ENCODE measurements at regions of chr3 and their contacts with region 1.

Region 1: DNA sequence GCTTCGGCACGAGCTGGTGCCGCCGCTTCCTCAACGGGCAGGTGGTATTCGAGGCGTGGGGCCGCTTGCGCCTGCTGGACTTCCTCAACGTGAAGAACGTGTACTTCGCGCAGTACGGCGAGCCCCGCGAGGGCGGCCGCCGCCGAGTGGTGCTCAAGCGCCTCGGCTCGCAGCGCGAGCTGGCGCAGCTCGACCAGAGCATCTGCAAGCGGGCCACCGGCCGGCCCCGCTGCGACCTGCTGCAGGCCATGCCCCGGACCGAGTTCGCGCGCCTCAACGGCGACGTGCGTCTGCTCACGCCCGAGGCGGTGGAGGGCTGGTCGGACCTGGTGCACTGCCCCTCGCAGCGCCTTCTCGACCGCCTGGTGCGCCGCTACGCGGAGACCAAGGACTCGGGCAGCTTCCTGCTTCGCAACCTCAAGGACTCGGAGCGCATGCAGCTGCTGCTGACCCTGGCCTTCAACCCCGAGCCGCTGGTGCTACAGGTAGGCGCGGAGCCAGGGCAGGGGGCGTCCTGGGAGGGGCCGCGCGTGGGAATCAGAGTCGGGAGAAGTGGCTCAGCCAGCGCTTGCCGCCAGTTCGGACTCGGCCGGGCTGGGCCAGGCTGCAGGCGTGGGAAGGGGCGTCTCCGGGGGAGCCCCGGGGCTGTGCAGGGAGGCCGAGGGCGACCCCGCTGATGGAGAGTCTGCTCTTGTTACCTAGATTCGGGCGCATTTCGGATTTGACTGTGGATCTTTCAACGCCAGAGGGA is 1.1 kb downstream of the DIPK2A start:
- DNase-seq: peak in 4 of 5 donors; percentile 40 to 77 (median 57)
- H3K4me3 ChIP-seq: peak overlapping the region; percentile 45 to 99
- H3K4me3 Mint-ChIP-seq: peak overlapping the region; percentile 96 to 100 (median 98)
- H3K27ac ChIP-seq: peak overlapping the region; percentile 64
- H3K27ac Mint-ChIP-seq: peak overlapping the region; percentile 92 to 100 (median 94)
- H3K4me1 ChIP-seq: peaks cover 51% of the 10 kb centered on the region
- H3K4me1 Mint-ChIP-seq: peaks cover 25 to 59% (median 32%) of the 10 kb centered on the region in 4 donors
- H3K27me3 ChIP-seq: no peaks in the 10 kb centered on the region
- H3K27me3 Mint-ChIP-seq: no peaks in the 10 kb centered on the region

Region 2: DNA sequence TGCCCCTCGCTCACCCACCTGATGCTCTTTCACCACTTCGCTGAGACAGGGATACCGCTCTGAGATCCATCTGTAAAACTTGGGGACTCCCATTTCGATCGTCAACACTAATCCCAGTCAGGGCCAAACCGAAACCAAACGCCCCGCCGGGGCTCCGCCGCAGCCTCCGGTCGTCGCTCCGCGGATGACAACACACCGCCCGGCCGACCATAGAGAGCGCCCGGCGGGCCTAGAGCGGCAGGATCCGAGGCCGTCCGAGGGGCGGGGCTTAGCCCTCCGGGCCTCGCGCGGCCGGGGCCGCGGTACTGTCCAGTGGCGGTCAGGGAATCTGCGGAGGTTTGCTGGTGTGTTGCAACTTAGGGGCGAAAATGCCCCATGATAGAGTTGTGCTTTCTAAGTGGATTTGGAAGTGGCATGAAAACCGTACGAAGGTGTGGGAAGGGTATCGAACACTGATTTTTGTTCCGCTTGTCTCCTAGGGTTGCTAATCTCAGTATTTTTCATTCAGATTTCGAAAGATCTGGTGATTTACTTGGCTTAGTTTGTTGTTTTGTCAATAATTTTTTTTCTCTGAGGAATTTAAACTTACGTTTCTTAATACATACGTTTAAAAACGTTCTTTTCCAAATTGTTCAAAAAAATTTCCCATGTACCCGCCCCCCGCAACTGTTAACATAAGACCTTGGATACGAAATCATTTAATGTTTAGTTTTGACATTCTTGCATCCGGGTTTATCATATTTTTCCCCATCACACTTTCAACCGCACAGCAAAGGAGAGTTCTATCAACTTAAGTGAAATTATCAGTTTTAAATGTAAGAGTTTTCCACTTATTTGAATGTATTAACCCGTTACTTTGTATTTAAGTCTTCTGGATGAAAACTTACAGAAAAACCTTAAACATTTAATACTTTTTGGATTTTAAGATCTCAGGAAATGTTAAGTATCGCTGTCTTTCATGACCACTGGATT is 1524.5 kb before region 1 on chr3 and contains the start of gene XRN1:
- CTCF ChIA-PET with region 1: no interaction called
- POLR2A ChIA-PET with region 1: interaction called, 4 read pairs
- intact Hi-C with region 1: loop called (anchors 10 kb)
- DNase-seq: peak; percentile 94 to 98 (median 95)
- H3K4me3 ChIP-seq: peak within 1 kb of the TSS; percentile 96 to 99
- H3K4me3 Mint-ChIP-seq: peak within 1 kb of the TSS; percentile 98 to 100 (median 99)
- H3K27ac ChIP-seq: peak within 1 kb of the TSS; percentile 100
- H3K27ac Mint-ChIP-seq: peak within 1 kb of the TSS; percentile 99 to 100 (median 100)
- H3K4me1 ChIP-seq: peaks cover 44% of the 10 kb centered on the region
- H3K4me1 Mint-ChIP-seq: peaks cover 27 to 54% (median 41%) of the 10 kb centered on the region in 4 donors
- H3K27me3 ChIP-seq: no peaks in the 10 kb centered on the region
- H3K27me3 Mint-ChIP-seq: no peaks in the 10 kb centered on the region
- total RNA-seq, gene XRN1: 102 to 104 TPM

Region 3: GRCh38 chr3:142595951-142596725 is 1376.5 kb before region 1 on chr3 and contains the start of gene PLS1:
- CTCF ChIA-PET with region 1: no interaction called
- POLR2A ChIA-PET with region 1: no interaction called
- intact Hi-C with region 1: loop called (anchors 5 kb)
- DNase-seq: peak; percentile 82 to 89 (median 85)
- H3K4me3 ChIP-seq: peak within 1 kb of the TSS; percentile 91 to 93
- H3K4me3 Mint-ChIP-seq: peak within 1 kb of the TSS; percentile 97 to 99 (median 98)
- H3K27ac ChIP-seq: peak within 1 kb of the TSS; percentile 36
- H3K27ac Mint-ChIP-seq: peak within 1 kb of the TSS; percentile 65 to 97 (median 96)
- H3K4me1 ChIP-seq: peaks cover 15% of the 10 kb centered on the region
- H3K4me1 Mint-ChIP-seq: peaks cover 7 to 22% (median 15%) of the 10 kb centered on the region in 4 donors
- H3K27me3 ChIP-seq: no peaks in the 10 kb centered on the region
- H3K27me3 Mint-ChIP-seq: peaks cover 1 to 2% of the 10 kb centered on the region in 2 donors
- total RNA-seq, gene PLS1: 2.7 to 3.1 TPM

Region 4: DNA sequence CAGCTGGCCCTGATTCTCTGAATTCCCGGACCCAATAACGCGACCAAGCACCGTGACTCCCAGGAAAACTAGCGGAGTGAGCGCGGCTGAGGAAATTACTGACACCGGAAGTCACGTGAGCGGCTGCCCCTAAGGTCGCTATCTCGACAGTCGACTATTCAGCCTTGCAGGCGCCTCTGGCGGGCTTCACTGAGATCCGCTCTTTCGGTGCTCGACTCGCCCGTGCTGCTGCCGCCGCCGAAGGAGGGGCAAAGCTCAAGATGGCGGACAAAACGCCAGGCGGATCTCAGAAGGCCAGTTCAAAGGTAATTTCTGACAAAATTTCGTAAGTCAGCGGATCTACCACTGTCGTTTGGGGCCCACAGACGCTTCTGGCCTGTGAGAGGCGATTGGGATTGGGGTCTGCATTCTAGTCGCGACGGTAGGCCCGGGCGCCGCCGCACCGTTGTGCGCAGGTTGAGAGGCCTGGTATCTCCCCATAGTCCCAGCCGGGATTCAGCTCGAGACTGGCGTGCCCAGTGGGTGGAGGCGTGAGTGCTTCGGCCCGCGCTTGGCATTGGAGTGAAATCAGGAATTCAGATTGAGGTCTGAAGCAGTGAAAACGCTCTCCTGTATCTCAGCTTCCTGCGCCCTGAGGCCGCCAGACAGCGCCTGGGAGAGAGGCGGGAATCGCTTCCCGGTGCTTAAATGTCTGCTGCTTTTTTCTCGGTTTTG is 971.2 kb before region 1 on chr3 and contains the start of gene U2SURP:
- CTCF ChIA-PET with region 1: interaction called, 3 read pairs
- POLR2A ChIA-PET with region 1: interaction called, 16 read pairs
- intact Hi-C with region 1: loop called (anchors 1 kb)
- DNase-seq: peak; percentile 88 to 96 (median 92)
- H3K4me3 ChIP-seq: peak within 1 kb of the TSS; percentile 82 to 100
- H3K4me3 Mint-ChIP-seq: peak within 1 kb of the TSS; percentile 97 to 100 (median 99)
- H3K27ac ChIP-seq: peak within 1 kb of the TSS; percentile 95
- H3K27ac Mint-ChIP-seq: peak within 1 kb of the TSS; percentile 97 to 100 (median 100)
- H3K4me1 ChIP-seq: peaks cover 49% of the 10 kb centered on the region
- H3K4me1 Mint-ChIP-seq: peaks cover 28 to 57% (median 38%) of the 10 kb centered on the region in 4 donors
- H3K27me3 ChIP-seq: no peaks in the 10 kb centered on the region
- H3K27me3 Mint-ChIP-seq: peaks cover 0 to 2% of the 10 kb centered on the region in 2 donors
- total RNA-seq, gene U2SURP: 137 TPM

Region 5: DNA sequence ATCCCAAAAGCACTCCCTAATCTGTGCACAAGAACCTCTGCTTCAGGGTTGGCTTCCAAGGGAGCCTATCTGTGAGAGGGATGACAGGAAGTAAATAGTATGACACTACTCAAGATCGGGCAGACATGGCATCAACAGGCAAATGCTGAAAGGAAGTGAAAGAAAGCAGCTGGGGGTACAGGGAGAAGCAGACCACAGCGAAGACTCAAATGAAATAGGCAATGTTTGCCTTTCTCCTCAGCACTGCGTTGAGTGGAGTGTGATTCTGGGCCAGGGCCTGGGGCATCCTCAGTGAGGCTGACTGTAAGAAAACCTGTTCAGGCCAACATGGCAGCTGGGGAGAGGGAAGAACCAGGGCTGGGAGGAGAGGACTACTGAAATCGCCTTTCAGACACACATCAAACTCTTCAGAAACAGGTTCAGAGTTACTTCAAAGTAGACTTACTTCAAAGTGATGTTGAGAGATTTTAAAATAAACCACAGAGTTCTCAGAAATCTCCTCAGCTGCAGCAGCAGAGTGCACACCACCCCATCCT is 221.0 kb before region 1 on chr3:
- CTCF ChIA-PET with region 1: interaction called, 3 read pairs
- POLR2A ChIA-PET with region 1: interaction called, 27 read pairs
- intact Hi-C with region 1: no loop called
- DNase-seq: peak; percentile 37 to 58 (median 46)
- H3K4me3 ChIP-seq: peak overlapping the region in 1 of 2 donors; percentile 20
- H3K4me3 Mint-ChIP-seq: peak overlapping the region; percentile 50 to 81 (median 72)
- H3K27ac ChIP-seq: peak overlapping the region; percentile 45
- H3K27ac Mint-ChIP-seq: peak overlapping the region; percentile 81 to 97 (median 93)
- H3K4me1 ChIP-seq: peaks cover 38% of the 10 kb centered on the region
- H3K4me1 Mint-ChIP-seq: peaks cover 20 to 51% (median 43%) of the 10 kb centered on the region in 4 donors
- H3K27me3 ChIP-seq: no peaks in the 10 kb centered on the region
- H3K27me3 Mint-ChIP-seq: no peaks in the 10 kb centered on the region

Region 6: GRCh38 chr3:143847787-143848631 is 124.7 kb before region 1 on chr3 and contains the start of gene SLC9A9:
- CTCF ChIA-PET with region 1: interaction called, 24 read pairs
- POLR2A ChIA-PET with region 1: interaction called, 78 read pairs
- intact Hi-C with region 1: loop called (anchors 1 kb)
- DNase-seq: peak; percentile 40 to 51 (median 46)
- H3K4me3 ChIP-seq: peak within 1 kb of the TSS; percentile 85 to 98
- H3K4me3 Mint-ChIP-seq: peak within 1 kb of the TSS; percentile 95 to 99 (median 98)
- H3K27ac ChIP-seq: peak within 1 kb of the TSS; percentile 58
- H3K27ac Mint-ChIP-seq: peak within 1 kb of the TSS; percentile 79 to 97 (median 91)
- H3K4me1 ChIP-seq: peaks cover 64% of the 10 kb centered on the region
- H3K4me1 Mint-ChIP-seq: peaks cover 45 to 71% (median 55%) of the 10 kb centered on the region in 4 donors
- H3K27me3 ChIP-seq: no peaks in the 10 kb centered on the region
- H3K27me3 Mint-ChIP-seq: no peaks in the 10 kb centered on the region
- total RNA-seq, gene SLC9A9: 30.8 to 34.8 TPM

Region 7: DNA sequence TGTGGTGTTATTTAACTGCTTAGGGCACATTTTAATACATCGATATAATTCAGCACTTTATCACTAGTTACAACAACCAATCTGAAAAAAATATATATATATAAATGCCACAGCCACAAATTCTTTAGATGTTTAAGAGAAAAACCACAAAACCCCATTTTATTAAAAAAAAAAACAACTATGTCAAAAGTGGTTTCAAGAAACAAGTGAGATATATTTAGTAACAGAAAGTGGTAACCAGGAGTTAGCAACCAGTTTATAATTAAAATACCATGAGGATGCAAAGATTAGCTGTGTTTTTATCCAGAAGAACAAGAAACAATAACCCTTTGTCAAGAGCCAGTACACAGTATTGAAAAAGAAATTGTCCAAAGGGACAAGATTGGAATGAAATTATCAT is 15.8 kb before region 1 on chr3:
- CTCF ChIA-PET with region 1: interaction called, 13 read pairs
- POLR2A ChIA-PET with region 1: interaction called, 12 read pairs
- intact Hi-C with region 1: no loop called
- DNase-seq: no peak
- H3K4me3 ChIP-seq: no peak overlapping the region
- H3K4me3 Mint-ChIP-seq: peak overlapping the region in 2 of 8 donors; percentile 13 to 52
- H3K27ac ChIP-seq: no peak overlapping the region
- H3K27ac Mint-ChIP-seq: no peak overlapping the region
- H3K4me1 ChIP-seq: peaks cover 11% of the 10 kb centered on the region
- H3K4me1 Mint-ChIP-seq: peaks cover 6 to 18% (median 7%) of the 10 kb centered on the region in 4 donors
- H3K27me3 ChIP-seq: peaks cover 3% of the 10 kb centered on the region
- H3K27me3 Mint-ChIP-seq: peaks cover 6 to 13% of the 10 kb centered on the region in 2 donors